CD8-positive, alpha-beta T cell (primary cell): ENCODE measurements at regions of chr5 and their contacts with region 1.

Region 1: DNA sequence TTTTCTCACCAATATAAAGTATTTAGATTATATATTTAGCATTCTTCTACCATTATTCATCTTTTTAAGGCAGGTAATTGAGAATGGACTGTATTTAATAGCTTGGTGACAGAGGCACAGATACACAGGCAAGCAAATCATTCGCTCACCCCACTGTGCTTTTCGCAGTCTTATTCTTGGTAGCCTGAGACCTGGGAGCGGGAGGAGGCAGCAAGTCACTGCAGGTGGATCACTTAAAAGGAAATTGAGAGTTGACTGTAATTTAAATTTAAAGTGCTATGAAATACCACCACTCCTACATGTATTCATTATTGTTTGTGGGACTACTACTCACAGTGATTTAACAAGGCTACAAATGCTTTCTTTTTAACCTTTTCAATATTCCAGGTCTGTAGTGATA is 9.7 kb downstream of the RICTOR start:
- DNase-seq: no peak
- ATAC-seq: no peak
- H3K4me3 ChIP-seq: no peak overlapping the region
- H3K4me3 Mint-ChIP-seq: no peak overlapping the region
- H3K27ac ChIP-seq: no peak overlapping the region
- H3K27ac Mint-ChIP-seq: no peak overlapping the region
- H3K4me1 ChIP-seq: peaks cover 57% of the 10 kb centered on the region
- H3K4me1 Mint-ChIP-seq: peaks cover 76% of the 10 kb centered on the region
- H3K27me3 ChIP-seq: no peaks in the 10 kb centered on the region
- H3K27me3 Mint-ChIP-seq: no peaks in the 10 kb centered on the region
- CTCF ChIP-seq: no peak

Region 2: GRCh38 chr5:38765399-38765861 is 299.0 kb before region 1 on chr5:
- CTCF ChIA-PET with region 1: no interaction called
- POLR2A ChIA-PET with region 1: no interaction called
- intact Hi-C with region 1: no loop called
- DNase-seq: no peak
- ATAC-seq: no peak
- H3K4me3 ChIP-seq: no peak overlapping the region
- H3K4me3 Mint-ChIP-seq: no peak overlapping the region
- H3K27ac ChIP-seq: no peak overlapping the region
- H3K27ac Mint-ChIP-seq: no peak overlapping the region
- H3K4me1 ChIP-seq: no peaks in the 10 kb centered on the region
- H3K4me1 Mint-ChIP-seq: no peaks in the 10 kb centered on the region
- H3K27me3 ChIP-seq: peaks cover 0 to 3% of the 10 kb centered on the region in 2 experiments
- H3K27me3 Mint-ChIP-seq: peaks cover 15% of the 10 kb centered on the region
- CTCF ChIP-seq: no peak

Region 3: GRCh38 chr5:39040875-39041274 is 23.6 kb before region 1 on chr5:
- CTCF ChIA-PET with region 1: no interaction called
- POLR2A ChIA-PET with region 1: no interaction called
- intact Hi-C with region 1: loop called in 1 of 2 experiments (anchors 2 kb)
- DNase-seq: peak in 3 of 9 experiments; percentile 20 to 39 (median 35)
- ATAC-seq: no peak
- H3K4me3 ChIP-seq: no peak overlapping the region
- H3K4me3 Mint-ChIP-seq: no peak overlapping the region
- H3K27ac ChIP-seq: no peak overlapping the region
- H3K27ac Mint-ChIP-seq: peak overlapping the region; percentile 2
- H3K4me1 ChIP-seq: peaks cover 5% of the 10 kb centered on the region
- H3K4me1 Mint-ChIP-seq: peaks cover 69% of the 10 kb centered on the region
- H3K27me3 ChIP-seq: no peaks in the 10 kb centered on the region
- H3K27me3 Mint-ChIP-seq: no peaks in the 10 kb centered on the region
- CTCF ChIP-seq: no peak